Mammary epithelial cell (primary cell): ENCODE measurements at regions of chr3 and their contacts with region 1.

Region 1: GRCh38 chr3:8663177-8664061 is 18.8 kb upstream of the SSUH2 start:
- DNase-seq: peak; percentile 65
- H3K4me3 ChIP-seq: no peak overlapping the region
- H3K27ac ChIP-seq: no peak overlapping the region
- H3K4me1 ChIP-seq: no peaks in the 10 kb centered on the region
- H3K27me3 ChIP-seq: no peaks in the 10 kb centered on the region
- CTCF ChIP-seq: peak; percentile 52 to 71

Region 2: DNA sequence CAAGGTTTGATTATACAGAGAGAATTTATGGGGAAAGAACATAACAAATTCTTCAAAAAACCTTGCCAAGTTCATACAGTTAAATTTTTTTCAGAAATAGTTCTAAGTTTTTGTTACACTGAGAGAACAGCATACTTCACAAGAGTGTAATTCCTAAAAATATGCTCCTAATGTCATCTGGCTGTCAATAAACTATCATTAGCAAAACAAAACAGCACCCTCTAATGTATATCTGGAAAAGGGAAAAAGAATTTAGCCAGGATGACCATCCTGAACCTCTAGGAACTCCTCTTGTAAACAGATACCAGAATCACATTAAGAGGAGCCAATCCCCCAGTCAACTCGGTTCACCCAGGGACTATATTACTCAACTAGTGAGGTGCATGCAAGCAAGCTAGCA is 236.6 kb after region 1 on chr3:
- CTCF ChIA-PET with region 1: no interaction called
- dilution Hi-C with region 1: no loop called
- in situ Hi-C with region 1: no loop called
- intact Hi-C with region 1: loop called (anchors 1 kb)
- DNase-seq: no peak
- H3K4me3 ChIP-seq: no peak overlapping the region
- H3K27ac ChIP-seq: no peak overlapping the region
- H3K4me1 ChIP-seq: no peaks in the 10 kb centered on the region
- H3K27me3 ChIP-seq: no peaks in the 10 kb centered on the region
- CTCF ChIP-seq: no peak

Region 3: GRCh38 chr3:8938021-8938420 is 274.6 kb after region 1 on chr3:
- CTCF ChIA-PET with region 1: no interaction called
- dilution Hi-C with region 1: no loop called
- in situ Hi-C with region 1: no loop called
- intact Hi-C with region 1: loop called (anchors 10 kb)
- DNase-seq: peak; percentile 11
- H3K4me3 ChIP-seq: no peak overlapping the region
- H3K27ac ChIP-seq: peak overlapping the region; percentile 75
- H3K4me1 ChIP-seq: peaks cover 18% of the 10 kb centered on the region
- H3K27me3 ChIP-seq: no peaks in the 10 kb centered on the region
- CTCF ChIP-seq: peak; percentile 43 to 53

Region 4: DNA sequence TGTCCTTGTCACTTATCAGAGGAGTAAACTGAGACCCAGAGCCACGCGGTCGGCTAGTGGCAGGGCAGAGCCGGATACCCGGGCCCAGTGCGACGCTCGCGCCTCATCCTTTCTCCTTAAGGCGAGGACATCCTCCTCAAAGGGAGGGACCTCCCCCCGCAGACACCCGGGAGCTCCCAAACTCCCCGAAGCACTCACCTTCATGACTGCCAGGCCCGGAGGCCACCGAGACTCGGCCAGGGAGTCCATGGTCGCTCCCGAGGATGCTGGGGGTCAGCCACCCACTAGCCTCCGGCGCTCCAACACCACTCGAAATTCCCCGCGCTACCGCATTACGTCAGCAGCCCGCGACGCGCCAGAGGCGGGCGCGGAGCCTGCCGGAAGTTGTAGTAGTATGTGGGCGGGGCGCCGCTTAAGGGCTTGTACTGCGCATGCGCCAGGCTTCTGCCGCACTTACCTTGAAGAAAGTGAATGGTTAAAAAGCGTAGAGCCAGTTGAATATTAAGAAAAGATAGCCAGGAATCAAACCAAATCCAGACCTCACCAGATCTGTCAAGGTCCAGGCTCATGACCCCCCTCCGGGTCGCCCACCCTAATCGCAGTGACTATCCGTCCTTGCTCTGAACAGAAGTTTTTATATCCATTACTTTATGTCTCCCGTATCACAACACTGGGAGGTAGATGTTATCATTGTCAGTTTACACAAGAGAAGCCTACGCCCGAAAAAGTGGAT is 299.9 kb after region 1 on chr3 and contains the start of gene RAD18:
- CTCF ChIA-PET with region 1: no interaction called
- dilution Hi-C with region 1: no loop called
- in situ Hi-C with region 1: no loop called
- intact Hi-C with region 1: loop called (anchors 5 kb)
- DNase-seq: peak; percentile 86
- H3K4me3 ChIP-seq: peak within 1 kb of the TSS; percentile 67 to 98 (median 89)
- H3K27ac ChIP-seq: peak within 1 kb of the TSS; percentile 87
- H3K4me1 ChIP-seq: peaks cover 38% of the 10 kb centered on the region
- H3K27me3 ChIP-seq: no peaks in the 10 kb centered on the region
- CTCF ChIP-seq: no peak
- total RNA-seq, gene RAD18: 11.5 to 27.0 TPM